Head of caudate nucleus (tissue), 42 donors: ENCODE measurements at regions of chr12 and their contacts with region 1.

Region 1: GRCh38 chr12:57459055-57459749 is 383 bp upstream of the GLI1 start:
- DNase-seq: peak; percentile 87 to 97 (median 94)

Region 2: GRCh38 chr12:57229634-57230380 is 229.4 kb before region 1 on chr12 and contains the start of gene SHMT2:
- intact Hi-C with region 1: loop called (anchors 10 kb)
- DNase-seq: peak; percentile 85 to 98 (median 94)

Region 3: DNA sequence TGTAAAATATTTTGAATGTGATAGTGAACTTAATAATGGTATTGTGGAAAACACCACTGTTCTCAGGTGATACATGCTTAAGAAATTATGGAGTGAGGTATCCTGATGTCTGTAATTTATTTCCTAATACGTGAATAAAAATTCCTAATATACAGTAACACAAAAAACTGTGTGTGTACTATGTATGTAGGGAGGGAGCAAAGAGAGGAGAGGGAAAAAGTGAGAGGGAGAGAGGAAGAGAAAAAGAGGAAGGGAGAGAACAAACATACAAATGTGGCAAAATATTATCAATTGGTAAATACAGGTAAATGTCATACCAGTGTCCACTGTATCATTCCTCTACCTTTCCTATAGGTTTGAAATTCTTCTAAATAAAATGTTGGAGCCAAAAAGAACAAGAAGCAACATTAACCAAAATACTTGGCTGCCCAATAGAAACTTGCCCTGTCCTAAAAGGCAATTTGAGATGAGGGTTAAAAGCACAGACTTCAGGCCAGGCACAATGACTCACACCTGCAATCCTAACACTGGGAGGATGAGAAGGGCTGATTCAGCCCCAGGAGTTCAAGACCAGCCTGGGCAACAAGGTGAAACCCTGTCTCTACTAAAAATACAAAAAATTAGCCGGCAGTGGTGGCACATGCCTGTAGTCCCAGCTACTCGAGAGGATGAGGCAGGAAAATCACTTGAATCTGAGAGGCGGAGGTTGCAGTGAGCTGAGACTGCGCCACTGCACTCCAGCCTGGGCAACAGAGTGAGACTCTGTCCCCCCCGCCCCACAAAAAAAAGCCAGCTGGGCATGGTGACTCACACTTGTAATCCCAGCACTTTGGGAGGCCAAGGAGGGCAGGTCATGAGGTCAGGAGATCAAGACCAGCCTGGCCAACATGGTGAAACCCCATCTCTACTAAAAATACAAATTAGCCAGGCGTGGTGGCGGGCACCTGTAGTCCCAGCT is 42.9 kb before region 1 on chr12:
- intact Hi-C with region 1: no loop called
- DNase-seq: no peak

Region 4: DNA sequence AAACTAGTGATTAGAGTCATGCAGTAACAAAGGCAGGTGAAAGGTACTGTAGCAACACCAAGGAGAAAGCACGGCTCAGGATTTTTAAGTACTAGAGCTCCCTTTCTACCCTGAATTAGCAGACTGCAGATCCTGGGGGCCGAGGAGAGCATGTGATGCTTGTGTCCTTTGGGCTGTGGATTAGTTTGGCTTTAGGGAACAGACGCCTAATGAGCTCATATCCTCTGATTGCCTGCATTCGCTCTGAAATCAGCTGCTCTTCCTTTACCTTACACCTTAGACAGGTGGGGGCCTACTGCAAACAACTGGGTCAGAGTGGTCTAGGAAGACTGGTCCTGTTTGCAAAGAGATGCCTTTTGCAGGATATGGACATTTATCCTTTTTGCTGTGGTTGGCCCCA is 134.0 kb after region 1 on chr12:
- intact Hi-C with region 1: no loop called
- DNase-seq: no peak

Region 5: GRCh38 chr12:58711974-58712373 is 1252.8 kb after region 1 on chr12:
- intact Hi-C with region 1: no loop called
- DNase-seq: no peak